ENCODE measurements at regions of chr5 and their contacts with region 1.

Region 1: DNA sequence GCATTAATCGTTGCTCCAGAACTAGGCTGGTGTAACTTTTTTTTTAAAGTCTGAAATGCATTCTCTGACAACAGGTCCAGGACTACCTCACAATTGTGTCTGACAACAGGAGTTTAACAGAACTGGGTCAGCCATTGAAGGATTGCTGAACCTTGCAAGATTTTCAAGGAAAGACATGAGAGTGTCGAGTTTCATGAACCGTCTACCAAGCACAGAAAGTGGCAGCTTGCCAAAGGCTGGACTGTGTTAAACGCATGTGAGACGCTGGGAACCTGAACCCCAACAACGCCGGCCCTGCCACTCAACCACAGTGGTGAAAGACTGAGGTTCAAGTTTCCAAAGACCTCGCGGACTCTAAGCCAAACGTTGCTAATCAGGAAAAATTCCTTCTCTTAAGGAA is 79.1 kb downstream of the LHFPL2 start:
- DNase-seq: peak; percentile 83
- H3K4me3 Mint-ChIP-seq: peak overlapping the region; percentile 33
- H3K27ac Mint-ChIP-seq: peak overlapping the region; percentile 91
- H3K4me1 Mint-ChIP-seq: peaks cover 50% of the 10 kb centered on the region
- H3K27me3 Mint-ChIP-seq: no peaks in the 10 kb centered on the region
- CTCF ChIP-seq: no peak

Region 2: GRCh38 chr5:78490709-78491485 is 78.6 kb before region 1 on chr5:
- CTCF ChIA-PET with region 1: no interaction called
- intact Hi-C with region 1: no loop called
- DNase-seq: peak; percentile 31
- H3K4me3 Mint-ChIP-seq: no peak overlapping the region
- H3K27ac Mint-ChIP-seq: peak overlapping the region; percentile 57
- H3K4me1 Mint-ChIP-seq: peaks cover 38% of the 10 kb centered on the region
- H3K27me3 Mint-ChIP-seq: no peaks in the 10 kb centered on the region
- CTCF ChIP-seq: no peak

Region 3: DNA sequence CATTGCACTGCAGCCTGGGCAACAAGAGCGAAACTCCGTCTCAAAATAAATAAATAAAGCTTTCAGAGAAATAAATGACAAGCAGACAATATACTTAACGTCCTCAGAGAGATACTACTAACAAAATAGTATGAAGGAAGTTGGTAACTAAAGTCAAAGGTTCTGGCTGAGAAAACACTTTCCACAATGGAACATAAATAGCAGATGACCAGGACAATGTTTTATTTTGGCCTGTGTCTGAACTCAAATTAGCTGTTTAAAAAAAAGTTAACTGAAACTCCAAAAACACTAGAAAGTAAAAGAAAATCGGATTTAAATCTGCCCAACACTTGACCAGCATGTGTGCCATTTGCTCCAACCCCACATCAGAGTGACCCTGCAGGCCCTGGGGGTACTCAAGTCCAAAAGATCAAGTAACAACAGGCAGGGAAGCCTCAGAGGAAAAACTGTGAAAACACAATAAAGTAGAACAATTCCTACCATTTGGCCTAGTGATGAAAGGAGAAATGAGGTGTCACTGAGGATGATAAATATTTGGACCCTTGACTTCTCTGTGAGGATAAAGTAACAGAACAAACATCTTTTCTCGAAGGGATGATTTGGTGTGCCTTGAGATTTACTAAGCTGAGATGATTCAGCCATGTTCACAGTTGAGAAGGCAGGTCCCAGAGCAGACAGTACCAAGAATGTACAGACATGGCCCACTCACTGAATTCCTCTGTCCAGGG is 31.4 kb after region 1 on chr5:
- CTCF ChIA-PET with region 1: interaction called, 7 read pairs
- intact Hi-C with region 1: loop called (anchors 5 kb)
- DNase-seq: no peak
- H3K4me3 Mint-ChIP-seq: no peak overlapping the region
- H3K27ac Mint-ChIP-seq: no peak overlapping the region
- H3K4me1 Mint-ChIP-seq: peaks cover 65% of the 10 kb centered on the region
- H3K27me3 Mint-ChIP-seq: no peaks in the 10 kb centered on the region
- CTCF ChIP-seq: no peak

Region 4: DNA sequence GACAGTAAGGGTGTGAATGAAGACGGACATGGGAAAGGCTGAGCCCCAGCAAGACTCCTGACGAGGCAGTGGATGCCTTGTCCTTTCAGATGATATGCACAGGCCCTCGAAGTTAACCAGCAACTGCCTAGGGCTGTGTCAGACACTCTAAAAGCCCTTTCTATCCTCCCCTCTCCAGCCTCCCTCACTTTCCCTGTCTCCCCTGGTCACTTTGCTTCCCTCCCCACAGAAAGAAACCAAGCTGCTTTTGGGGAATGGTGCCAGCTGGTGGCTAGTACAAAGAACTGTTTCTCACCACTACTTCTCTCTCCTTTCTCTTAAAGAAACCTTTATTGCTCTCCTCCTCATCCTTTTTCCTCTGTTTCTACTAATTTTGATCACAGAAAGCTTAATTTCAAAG is 57.7 kb after region 1 on chr5:
- CTCF ChIA-PET with region 1: interaction called, 4 read pairs
- intact Hi-C with region 1: loop called (anchors 10 kb)
- DNase-seq: no peak
- H3K4me3 Mint-ChIP-seq: no peak overlapping the region
- H3K27ac Mint-ChIP-seq: no peak overlapping the region
- H3K4me1 Mint-ChIP-seq: peaks cover 60% of the 10 kb centered on the region
- H3K27me3 Mint-ChIP-seq: no peaks in the 10 kb centered on the region
- CTCF ChIP-seq: no peak